Gastrocnemius medialis (tissue), 4 donors: ENCODE measurements at regions of chr11 and their contacts with region 1.

Region 1: GRCh38 chr11:86056351-86056854 is 12.5 kb downstream of the PICALM start:
- DNase-seq: no peak
- ATAC-seq: no peak
- H3K4me3 ChIP-seq: no peak overlapping the region
- H3K27ac ChIP-seq: peak overlapping the region in 1 of 4 donors; percentile 12
- H3K4me1 ChIP-seq: peaks cover 71 to 72% of the 10 kb centered on the region in 2 donors
- H3K27me3 ChIP-seq: no peaks in the 10 kb centered on the region
- CTCF ChIP-seq: no peak
- POLR2A ChIP-seq: no peak

Region 2: DNA sequence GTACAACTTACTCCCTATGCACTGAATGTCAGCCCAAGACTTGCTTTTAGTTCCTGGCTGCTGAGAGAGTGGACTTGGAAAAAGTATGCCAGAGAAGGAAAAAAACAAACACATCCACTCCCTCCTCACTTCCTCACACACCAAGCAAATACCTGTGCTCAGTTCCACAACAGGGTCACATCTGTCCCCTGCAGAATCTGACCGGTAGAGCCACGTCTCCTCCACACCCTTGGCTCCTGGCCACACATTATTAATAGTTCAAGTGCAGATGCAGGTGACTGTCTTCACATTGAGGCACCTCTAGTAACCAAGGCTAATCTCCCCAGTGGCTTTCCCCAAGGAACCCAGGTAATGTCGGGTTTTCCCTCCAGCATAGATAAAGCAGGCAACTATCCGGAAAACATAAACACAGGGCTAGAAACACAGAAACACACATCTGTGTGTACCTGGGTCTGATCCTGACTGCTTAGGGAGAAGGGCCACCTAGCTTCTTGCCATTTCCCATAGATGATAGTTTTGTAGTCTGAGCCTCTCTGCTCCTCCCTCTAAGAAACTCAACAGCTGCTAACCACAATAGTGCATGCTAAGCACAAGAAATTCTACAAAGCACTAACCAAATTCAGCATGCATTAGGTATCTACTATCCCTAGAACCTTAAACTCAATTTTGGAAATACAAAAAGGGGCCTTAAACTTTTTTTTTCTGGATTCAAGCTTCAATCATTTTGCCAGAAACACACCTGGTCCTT is 255.6 kb before region 1 on chr11:
- in situ Hi-C with region 1: no loop called
- intact Hi-C with region 1: no loop called
- DNase-seq: no peak
- ATAC-seq: no peak
- H3K4me3 ChIP-seq: no peak overlapping the region
- H3K27ac ChIP-seq: no peak overlapping the region
- H3K4me1 ChIP-seq: no peaks in the 10 kb centered on the region
- H3K27me3 ChIP-seq: no peaks in the 10 kb centered on the region
- CTCF ChIP-seq: no peak
- POLR2A ChIP-seq: no peak

Region 3: GRCh38 chr11:85989746-85990145 is 66.7 kb before region 1 on chr11:
- in situ Hi-C with region 1: loop called in 1 of 4 experiments (anchors 10 kb)
- intact Hi-C with region 1: no loop called
- DNase-seq: no peak
- ATAC-seq: no peak
- H3K4me3 ChIP-seq: no peak overlapping the region
- H3K27ac ChIP-seq: no peak overlapping the region
- H3K4me1 ChIP-seq: peaks cover 0 to 6% of the 10 kb centered on the region in 2 donors
- H3K27me3 ChIP-seq: no peaks in the 10 kb centered on the region
- CTCF ChIP-seq: no peak
- POLR2A ChIP-seq: no peak